ENCODE measurements at regions of chr7 and their contacts with region 1.

Region 1: GRCh38 chr7:118183786-118184564 is at the start of gene LSM8:
- DNase-seq: peak; percentile 97
- H3K4me3 ChIP-seq: peak within 1 kb of the TSS; percentile 79 to 87
- H3K27ac ChIP-seq: peak within 1 kb of the TSS; percentile 85 to 91
- H3K4me1 ChIP-seq: no peaks in the 10 kb centered on the region
- H3K27me3 ChIP-seq: no peaks in the 10 kb centered on the region
- CTCF ChIP-seq: peak in 1 of 4 experiments; percentile 14
- POLR2A ChIP-seq: peak; percentile 77
- total RNA-seq, gene LSM8: 24.8 to 29.3 TPM

Region 2: DNA sequence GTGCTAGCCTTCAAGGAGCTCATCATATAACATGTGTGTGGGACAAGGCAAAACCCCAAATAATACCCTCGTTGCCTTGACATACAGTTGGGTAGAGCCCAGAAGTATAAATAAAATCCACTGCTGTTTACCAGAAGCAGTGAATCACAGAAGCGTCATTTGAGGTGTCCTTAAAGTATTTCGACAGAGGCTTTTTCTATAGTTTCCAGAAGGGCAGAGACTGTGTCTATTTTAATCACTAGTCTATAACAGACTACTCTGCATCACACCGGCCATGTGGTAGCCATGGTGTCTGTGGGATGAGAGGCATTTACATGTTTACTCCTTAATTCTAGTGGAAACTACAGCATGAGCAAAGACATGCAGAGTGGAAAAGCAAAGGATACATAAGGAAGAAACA is 442.0 kb before region 1 on chr7:
- intact Hi-C with region 1: loop called (anchors 10 kb)
- DNase-seq: no peak
- H3K4me3 ChIP-seq: no peak overlapping the region
- H3K27ac ChIP-seq: no peak overlapping the region
- H3K4me1 ChIP-seq: no peaks in the 10 kb centered on the region
- H3K27me3 ChIP-seq: no peaks in the 10 kb centered on the region
- CTCF ChIP-seq: no peak
- POLR2A ChIP-seq: no peak

Measured in prostate gland (tissue), 2 donors.